ENCODE measurements at regions of chr5 and their contacts with region 1.

Region 1: DNA sequence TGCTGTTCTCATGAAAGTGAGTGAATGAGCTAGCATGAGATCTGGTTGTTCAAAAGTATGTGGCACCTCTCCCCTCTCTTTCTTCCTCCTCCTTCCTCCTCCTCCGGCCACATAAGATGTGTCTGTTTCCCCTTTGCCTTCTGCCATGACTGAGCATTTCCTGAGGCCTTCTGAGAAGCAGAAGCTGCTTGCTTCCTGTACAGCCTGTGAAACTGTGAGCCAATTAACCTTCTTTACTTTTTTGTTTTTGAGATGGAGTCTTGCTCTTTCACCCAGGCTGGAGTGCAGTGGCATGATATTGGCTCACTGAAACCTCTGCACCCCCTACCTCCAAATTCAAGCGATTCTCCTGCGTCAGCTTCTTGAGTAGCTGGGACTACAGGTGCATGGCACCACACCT is 6.1 kb downstream of the S100Z start:
- DNase-seq: no peak
- ATAC-seq: no peak
- H3K4me3 ChIP-seq: no peak overlapping the region
- H3K27ac ChIP-seq: no peak overlapping the region
- H3K4me1 ChIP-seq: no peaks in the 10 kb centered on the region
- H3K27me3 ChIP-seq: no peaks in the 10 kb centered on the region
- CTCF ChIP-seq: no peak

Region 2: DNA sequence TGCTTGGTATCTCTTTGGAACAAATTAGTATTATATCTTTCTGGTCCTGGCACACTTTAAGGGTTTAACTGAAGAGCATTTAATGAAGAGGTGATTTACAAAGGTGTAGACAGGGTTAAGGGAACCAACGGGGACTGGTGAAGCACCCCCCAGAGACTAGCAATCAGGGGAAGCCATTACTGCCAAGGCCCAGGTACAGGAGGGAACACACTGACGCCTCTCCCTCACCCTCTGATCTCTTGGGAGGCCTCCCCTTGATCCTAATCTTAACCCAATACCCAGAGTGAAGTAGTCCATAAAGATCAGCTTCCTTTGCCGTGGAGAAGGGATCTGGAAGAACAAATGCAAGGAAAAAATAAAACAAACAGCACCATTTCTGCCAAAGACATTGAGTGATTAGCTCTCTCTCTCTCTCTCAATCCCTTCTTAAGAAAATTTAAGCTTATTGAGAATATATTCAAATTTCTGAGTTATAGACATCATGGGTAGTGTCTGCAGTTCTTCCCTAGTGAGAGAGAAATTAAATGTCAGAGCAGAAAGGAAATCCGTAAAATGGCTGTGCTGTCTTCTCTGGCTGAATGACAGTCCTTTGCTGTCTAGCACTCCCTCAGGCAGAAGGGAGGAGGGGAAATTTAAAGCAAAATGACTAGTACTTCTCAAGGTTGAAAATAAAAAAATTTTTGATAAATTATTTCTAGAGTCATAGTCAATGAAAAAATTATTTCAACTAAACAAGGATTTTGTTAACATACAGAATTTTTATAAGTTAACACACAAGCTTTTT is 120.0 kb before region 1 on chr5:
- CTCF ChIA-PET with region 1: no interaction called
- POLR2A ChIA-PET with region 1: interaction called, 11 read pairs
- in situ Hi-C with region 1: no loop called
- intact Hi-C with region 1: no loop called
- DNase-seq: no peak
- ATAC-seq: no peak
- H3K4me3 ChIP-seq: no peak overlapping the region
- H3K27ac ChIP-seq: no peak overlapping the region; the same call in 1 of the 2 replicates
- H3K4me1 ChIP-seq: peaks cover 7% of the 10 kb centered on the region; the same call in 1 of the 2 replicates
- H3K27me3 ChIP-seq: no peaks in the 10 kb centered on the region
- CTCF ChIP-seq: no peak

Region 3: DNA sequence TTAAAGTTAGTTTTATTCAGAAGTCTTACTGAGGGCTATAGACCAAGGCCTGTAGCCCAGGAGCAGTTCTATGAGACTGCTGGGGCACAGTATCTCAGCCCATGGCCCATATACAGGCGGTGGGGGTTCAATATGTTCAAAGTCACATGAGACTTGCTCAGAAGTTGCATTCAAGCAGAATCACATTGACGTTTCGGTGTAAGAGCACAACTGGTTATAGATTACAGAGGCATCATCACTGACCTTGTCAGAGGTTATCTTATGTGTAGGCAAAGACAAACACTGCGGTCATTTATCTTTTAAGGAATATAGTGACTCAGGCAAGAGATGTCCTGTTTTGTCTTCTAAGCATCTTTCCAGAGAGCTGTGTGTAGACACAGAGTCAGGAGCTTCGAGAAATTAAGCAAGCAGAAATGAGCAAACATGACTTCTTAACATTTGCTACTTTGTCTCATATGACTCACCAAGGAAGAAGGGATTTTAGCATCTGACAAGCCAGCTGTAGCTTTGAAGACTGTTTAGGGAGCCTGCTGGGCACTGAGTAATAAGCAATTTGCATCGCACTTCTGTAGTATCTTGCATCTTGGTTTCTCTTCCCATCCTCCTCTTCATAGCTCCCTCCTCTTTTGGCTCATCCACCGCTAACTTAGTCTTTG is 50.0 kb before region 1 on chr5:
- CTCF ChIA-PET with region 1: no interaction called
- POLR2A ChIA-PET with region 1: interaction called, 12 read pairs
- in situ Hi-C with region 1: no loop called
- intact Hi-C with region 1: no loop called
- DNase-seq: peak; percentile 96
- ATAC-seq: peak; percentile 86
- H3K4me3 ChIP-seq: peak overlapping the region; percentile 11 to 52
- H3K27ac ChIP-seq: peak overlapping the region; percentile 77
- H3K4me1 ChIP-seq: peaks cover 54% of the 10 kb centered on the region
- H3K27me3 ChIP-seq: no peaks in the 10 kb centered on the region
- CTCF ChIP-seq: no peak